ENCODE measurements at regions of chr3 and their contacts with region 1.

Region 1: DNA sequence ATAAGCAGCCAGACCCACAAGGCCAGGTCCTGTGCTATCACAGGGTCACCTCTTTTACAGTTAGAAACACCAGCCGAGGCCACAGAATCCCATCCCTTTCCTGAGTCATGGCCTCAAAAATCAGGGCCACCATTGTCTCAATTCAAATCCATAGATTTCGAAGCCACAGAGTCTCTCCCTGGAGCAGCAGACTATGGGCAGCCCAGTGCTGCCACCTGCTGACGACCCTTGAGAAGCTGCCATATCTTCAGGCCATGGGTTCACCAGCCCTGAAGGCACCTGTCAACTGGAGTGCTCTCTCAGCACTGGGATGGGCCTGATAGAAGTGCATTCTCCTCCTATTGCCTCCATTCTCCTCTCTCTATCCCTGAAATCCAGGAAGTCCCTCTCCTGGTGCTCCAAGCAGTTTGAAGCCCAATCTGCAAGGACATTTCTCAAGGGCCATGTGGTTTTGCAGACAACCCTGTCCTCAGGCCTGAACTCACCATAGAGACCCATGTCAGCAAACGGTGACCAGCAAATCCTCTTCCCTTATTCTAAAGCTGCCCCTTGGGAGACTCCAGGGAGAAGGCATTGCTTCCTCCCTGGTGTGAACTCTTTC is 39.6 kb downstream of the TGM4 start:
- DNase-seq: peak; percentile 46 to 70
- H3K4me3 ChIP-seq: no peak overlapping the region
- H3K27ac ChIP-seq: no peak overlapping the region
- H3K4me1 ChIP-seq: no peaks in the 10 kb centered on the region
- H3K27me3 ChIP-seq: no peaks in the 10 kb centered on the region
- CTCF ChIP-seq: peak; percentile 76

Region 2: GRCh38 chr3:44323341-44323955 is 590.5 kb before region 1 on chr3:
- CTCF ChIA-PET with region 1: no interaction called
- POLR2A ChIA-PET with region 1: no interaction called
- intact Hi-C with region 1: loop called (anchors 1 kb)
- DNase-seq: peak in 1 of 2 experiments; percentile 57
- H3K4me3 ChIP-seq: no peak overlapping the region
- H3K27ac ChIP-seq: no peak overlapping the region
- H3K4me1 ChIP-seq: peaks cover 10% of the 10 kb centered on the region; the same call in 1 of the 2 replicates
- H3K27me3 ChIP-seq: no peaks in the 10 kb centered on the region
- CTCF ChIP-seq: peak; percentile 79

Region 3: GRCh38 chr3:44529927-44530326 is 384.0 kb before region 1 on chr3:
- CTCF ChIA-PET with region 1: no interaction called
- POLR2A ChIA-PET with region 1: no interaction called
- intact Hi-C with region 1: loop called (anchors 1 kb)
- DNase-seq: no peak
- H3K4me3 ChIP-seq: no peak overlapping the region
- H3K27ac ChIP-seq: no peak overlapping the region
- H3K4me1 ChIP-seq: no peaks in the 10 kb centered on the region
- H3K27me3 ChIP-seq: peaks cover 18% of the 10 kb centered on the region
- CTCF ChIP-seq: no peak; the same call in 1 of the 2 replicates

Region 4: DNA sequence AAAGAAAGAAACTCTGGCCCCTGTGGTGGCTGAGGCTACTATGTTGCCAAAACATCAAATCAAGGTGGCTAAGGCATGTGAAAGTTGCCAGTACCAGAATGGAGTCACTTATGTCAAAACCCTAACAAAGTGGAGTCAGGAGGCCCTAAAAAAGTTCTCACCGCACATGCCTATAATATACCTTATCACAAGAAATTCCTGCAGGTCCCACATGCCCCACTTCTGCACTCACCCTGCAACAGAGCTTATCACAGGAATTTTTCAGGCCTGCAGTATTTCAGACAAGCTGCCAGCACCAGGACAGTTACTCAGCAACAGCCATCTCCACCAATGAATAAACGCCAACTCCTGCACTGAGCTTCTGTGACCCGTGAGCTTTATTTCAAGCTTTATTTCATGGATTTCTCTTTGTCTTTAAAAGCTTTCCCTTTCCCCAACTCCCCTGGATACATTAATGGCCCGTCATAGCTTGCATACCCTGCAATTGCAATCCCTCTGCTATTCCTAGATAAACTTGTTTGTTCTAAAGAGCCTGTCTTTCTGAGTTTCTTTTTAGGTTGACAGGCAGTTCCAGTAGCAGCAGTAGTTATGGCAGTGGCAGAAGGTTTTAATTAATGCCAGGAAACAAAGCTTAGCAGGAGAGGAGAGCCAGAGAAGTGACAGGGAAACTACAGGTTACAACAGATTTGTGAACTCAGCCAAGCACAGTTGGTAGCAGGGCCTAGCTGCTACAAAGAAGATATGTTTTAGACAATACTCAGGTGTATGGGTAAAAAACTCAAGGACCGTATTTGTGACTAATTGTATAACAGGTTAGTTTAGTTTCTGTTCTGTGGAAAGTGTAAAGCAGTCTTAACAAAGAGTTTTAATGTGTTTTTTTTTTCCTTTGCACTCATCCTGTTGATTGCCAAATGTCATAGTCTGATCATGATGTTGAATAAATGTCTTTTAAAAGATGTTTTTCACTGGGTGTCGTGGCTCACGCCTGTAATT is 68.1 kb before region 1 on chr3:
- CTCF ChIA-PET with region 1: no interaction called
- POLR2A ChIA-PET with region 1: no interaction called
- intact Hi-C with region 1: loop called (anchors 5 kb)
- DNase-seq: peak in 1 of 2 experiments; percentile 71
- H3K4me3 ChIP-seq: no peak overlapping the region
- H3K27ac ChIP-seq: peak overlapping the region; percentile 50
- H3K4me1 ChIP-seq: peaks cover 9% of the 10 kb centered on the region; the same call in 1 of the 2 replicates
- H3K27me3 ChIP-seq: no peaks in the 10 kb centered on the region
- CTCF ChIP-seq: no peak

Region 5: DNA sequence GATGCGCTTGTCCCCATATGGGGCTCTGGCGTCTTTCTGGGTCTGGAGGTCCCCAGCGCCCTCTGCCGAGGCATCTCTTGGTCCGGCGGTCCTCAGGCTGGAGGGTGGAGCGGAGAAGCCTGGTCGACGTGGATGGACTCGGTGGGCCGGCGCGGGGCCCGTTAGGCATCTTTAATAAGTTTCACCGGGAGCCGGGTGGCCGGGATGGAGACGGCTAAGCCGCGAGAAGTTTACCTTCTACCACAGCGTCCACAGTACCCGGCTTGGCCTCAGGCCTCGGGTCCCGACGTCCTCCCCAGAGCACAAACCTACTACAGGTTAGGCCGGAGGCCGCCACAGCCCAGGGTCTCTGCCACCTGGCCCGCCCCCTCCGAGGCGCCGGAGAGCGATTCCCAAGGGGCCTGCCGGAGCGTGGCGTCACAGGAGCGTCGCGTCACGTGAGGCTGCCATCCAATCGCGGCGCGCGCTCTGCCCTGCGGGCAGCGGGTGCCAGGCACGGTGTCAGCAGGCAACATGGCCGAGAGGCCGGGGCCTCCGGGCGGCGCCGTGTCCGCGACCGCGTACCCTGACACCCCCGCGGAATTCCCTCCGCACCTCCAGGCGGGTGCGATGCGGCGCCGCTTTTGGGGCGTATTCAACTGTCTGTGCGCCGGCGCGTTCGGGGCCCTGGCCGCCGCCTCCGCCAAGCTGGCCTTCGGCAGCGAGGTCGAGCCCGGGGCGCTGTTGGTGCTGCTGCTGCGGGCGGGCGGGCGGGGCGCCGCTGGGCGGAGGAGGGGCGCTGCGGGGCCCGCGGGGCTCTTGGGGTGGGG is 52.4 kb before region 1 on chr3 and contains the start of gene TMEM42:
- CTCF ChIA-PET with region 1: no interaction called
- POLR2A ChIA-PET with region 1: no interaction called
- intact Hi-C with region 1: loop called (anchors 5 kb)
- DNase-seq: peak; percentile 67 to 86
- H3K4me3 ChIP-seq: peak within 1 kb of the TSS; percentile 80
- H3K27ac ChIP-seq: peak within 1 kb of the TSS; percentile 41
- H3K4me1 ChIP-seq: peaks cover 7% of the 10 kb centered on the region
- H3K27me3 ChIP-seq: no peaks in the 10 kb centered on the region
- CTCF ChIP-seq: no peak
- total RNA-seq, gene TMEM42: 18.2 and 22.4 TPM in 2 replicates

Region 6: GRCh38 chr3:44883999-44884431 is 30.0 kb before region 1 on chr3:
- CTCF ChIA-PET with region 1: no interaction called
- POLR2A ChIA-PET with region 1: no interaction called
- intact Hi-C with region 1: no loop called
- DNase-seq: peak; percentile 68 to 91
- H3K4me3 ChIP-seq: no peak overlapping the region
- H3K27ac ChIP-seq: peak overlapping the region; percentile 77
- H3K4me1 ChIP-seq: peaks cover 43% of the 10 kb centered on the region
- H3K27me3 ChIP-seq: no peaks in the 10 kb centered on the region
- CTCF ChIP-seq: no peak

Region 7: GRCh38 chr3:44976002-44976815 is 62.2 kb after region 1 on chr3 and contains the starts of genes EXOSC7 and ZDHHC3:
- CTCF ChIA-PET with region 1: no interaction called
- POLR2A ChIA-PET with region 1: no interaction called
- intact Hi-C with region 1: loop called (anchors 5 kb)
- DNase-seq: peak; percentile 66 to 69
- H3K4me3 ChIP-seq: peak within 1 kb of the TSS; percentile 85
- H3K27ac ChIP-seq: peak within 1 kb of the TSS; percentile 63
- H3K4me1 ChIP-seq: peaks cover 68% of the 10 kb centered on the region
- H3K27me3 ChIP-seq: no peaks in the 10 kb centered on the region
- CTCF ChIP-seq: no peak
- total RNA-seq, gene EXOSC7: 56.2 and 58.0 TPM in 2 replicates
- total RNA-seq, gene ZDHHC3: 107 and 118 TPM in 2 replicates

Measured in PC-9 (cell line).